Caco-2 (cell line): ENCODE measurements at regions of chr4 and their contacts with region 1.

Region 1: DNA sequence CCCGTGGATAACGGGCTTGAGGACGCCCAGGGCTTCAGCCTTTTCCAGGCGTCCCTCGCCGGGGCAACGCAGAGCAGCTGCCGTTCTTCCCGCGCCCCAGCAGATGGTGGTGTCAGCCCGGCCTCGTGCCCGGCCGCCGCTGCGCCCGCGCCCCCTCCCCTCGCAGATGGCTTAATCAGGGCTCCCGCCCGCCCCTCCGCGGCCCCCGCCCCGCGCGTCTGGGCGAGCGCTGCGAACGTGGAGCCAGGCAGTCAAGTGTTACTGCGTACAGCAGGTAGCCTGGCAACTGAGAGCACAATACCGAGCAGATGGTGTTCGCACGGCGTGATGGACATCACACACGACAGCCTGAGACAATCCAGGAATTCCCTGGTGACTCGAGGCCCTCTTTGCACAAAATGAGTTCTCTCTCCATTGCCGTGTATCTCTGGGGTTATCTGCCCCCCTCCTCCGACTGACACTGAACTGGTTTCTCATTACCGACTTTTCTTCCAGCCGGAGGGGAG is 69.3 kb downstream of the MGST2 start:
- DNase-seq: peak; percentile 82 to 89
- H3K4me3 ChIP-seq: peak overlapping the region; percentile 29
- H3K4me3 Mint-ChIP-seq: peak overlapping the region; percentile 69
- H3K27ac Mint-ChIP-seq: peak overlapping the region; percentile 78
- H3K4me1 ChIP-seq: peaks cover 39% of the 10 kb centered on the region
- H3K4me1 Mint-ChIP-seq: peaks cover 22% of the 10 kb centered on the region
- H3K27me3 ChIP-seq: no peaks in the 10 kb centered on the region
- H3K27me3 Mint-ChIP-seq: no peaks in the 10 kb centered on the region
- CTCF ChIP-seq: peak; percentile 76 to 82

Region 2: GRCh38 chr4:139167774-139168444 is 567.0 kb before region 1 on chr4:
- CTCF ChIA-PET with region 1: no interaction called
- POLR2A ChIA-PET with region 1: no interaction called
- intact Hi-C with region 1: no loop called
- DNase-seq: peak in 1 of 2 experiments; percentile 59
- H3K4me3 ChIP-seq: no peak overlapping the region
- H3K4me3 Mint-ChIP-seq: no peak overlapping the region
- H3K27ac Mint-ChIP-seq: no peak overlapping the region
- H3K4me1 ChIP-seq: peaks cover 22% of the 10 kb centered on the region
- H3K4me1 Mint-ChIP-seq: peaks cover 12% of the 10 kb centered on the region
- H3K27me3 ChIP-seq: no peaks in the 10 kb centered on the region
- H3K27me3 Mint-ChIP-seq: no peaks in the 10 kb centered on the region
- CTCF ChIP-seq: peak; percentile 55 to 59

Region 3: GRCh38 chr4:139603576-139604387 is 131.1 kb before region 1 on chr4:
- CTCF ChIA-PET with region 1: no interaction called
- POLR2A ChIA-PET with region 1: no interaction called
- intact Hi-C with region 1: loop called (anchors 1 kb)
- DNase-seq: peak; percentile 67 to 77
- H3K4me3 ChIP-seq: no peak overlapping the region
- H3K4me3 Mint-ChIP-seq: no peak overlapping the region
- H3K27ac Mint-ChIP-seq: no peak overlapping the region
- H3K4me1 ChIP-seq: peaks cover 34% of the 10 kb centered on the region; the same call in 1 of the 2 replicates
- H3K4me1 Mint-ChIP-seq: peaks cover 37% of the 10 kb centered on the region
- H3K27me3 ChIP-seq: no peaks in the 10 kb centered on the region
- H3K27me3 Mint-ChIP-seq: no peaks in the 10 kb centered on the region
- CTCF ChIP-seq: peak; percentile 64 to 71

Region 4: GRCh38 chr4:139692309-139693012 is 42.5 kb before region 1 on chr4:
- CTCF ChIA-PET with region 1: interaction called, 4 read pairs
- POLR2A ChIA-PET with region 1: no interaction called
- intact Hi-C with region 1: loop called (anchors 2 kb)
- DNase-seq: peak; percentile 60 to 64
- H3K4me3 ChIP-seq: no peak overlapping the region
- H3K4me3 Mint-ChIP-seq: peak overlapping the region; percentile 60
- H3K27ac Mint-ChIP-seq: peak overlapping the region; percentile 93
- H3K4me1 ChIP-seq: peaks cover 87% of the 10 kb centered on the region
- H3K4me1 Mint-ChIP-seq: peaks cover 40% of the 10 kb centered on the region
- H3K27me3 ChIP-seq: no peaks in the 10 kb centered on the region
- H3K27me3 Mint-ChIP-seq: no peaks in the 10 kb centered on the region
- CTCF ChIP-seq: peak; percentile 46 to 48

Region 5: DNA sequence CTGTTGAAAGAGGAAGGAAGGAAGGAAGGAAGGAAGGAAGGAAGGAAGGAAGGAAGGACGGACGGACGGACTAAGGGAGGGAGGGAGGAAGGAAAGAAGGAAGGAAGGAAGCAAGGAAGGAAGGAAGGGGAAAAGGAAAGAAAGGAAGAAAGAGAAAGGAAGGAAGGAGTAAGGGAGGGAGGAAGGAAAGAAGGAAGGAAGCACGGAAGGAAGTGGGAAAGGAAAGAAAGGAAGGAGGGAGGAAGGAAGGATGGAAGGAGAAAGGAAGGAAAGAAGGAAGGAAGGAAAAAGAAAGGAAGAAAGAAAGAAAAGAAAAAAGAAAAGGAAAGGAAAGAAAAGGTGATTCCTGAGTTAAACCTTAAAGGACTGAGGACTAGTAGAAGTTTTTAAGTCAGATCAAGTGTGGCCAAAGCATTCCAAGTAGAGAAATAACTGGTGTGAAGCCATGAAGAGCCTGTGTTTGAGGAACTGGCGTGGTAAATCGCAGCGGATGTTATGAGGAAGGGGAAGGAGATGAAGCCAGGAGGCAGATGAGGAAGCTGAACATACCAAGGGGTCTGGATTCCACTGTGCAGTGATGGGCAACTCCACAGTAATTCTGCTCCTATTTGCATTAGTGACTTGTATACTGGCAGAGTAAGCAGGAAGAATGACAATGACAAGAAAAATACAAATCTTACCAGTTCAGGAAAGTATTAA is 94.2 kb after region 1 on chr4:
- CTCF ChIA-PET with region 1: no interaction called
- POLR2A ChIA-PET with region 1: no interaction called
- intact Hi-C with region 1: no loop called
- DNase-seq: no peak
- H3K4me3 ChIP-seq: no peak overlapping the region
- H3K4me3 Mint-ChIP-seq: no peak overlapping the region
- H3K27ac Mint-ChIP-seq: no peak overlapping the region
- H3K4me1 ChIP-seq: no peaks in the 10 kb centered on the region
- H3K4me1 Mint-ChIP-seq: peaks cover 7% of the 10 kb centered on the region
- H3K27me3 ChIP-seq: no peaks in the 10 kb centered on the region
- H3K27me3 Mint-ChIP-seq: no peaks in the 10 kb centered on the region
- CTCF ChIP-seq: no peak

Region 6: GRCh38 chr4:139841464-139842246 is 106.7 kb after region 1 on chr4:
- CTCF ChIA-PET with region 1: no interaction called
- POLR2A ChIA-PET with region 1: no interaction called
- intact Hi-C with region 1: loop called (anchors 5 kb)
- DNase-seq: peak; percentile 56 to 71
- H3K4me3 ChIP-seq: no peak overlapping the region
- H3K4me3 Mint-ChIP-seq: peak overlapping the region; percentile 13
- H3K27ac Mint-ChIP-seq: no peak overlapping the region
- H3K4me1 ChIP-seq: peaks cover 16% of the 10 kb centered on the region
- H3K4me1 Mint-ChIP-seq: peaks cover 15% of the 10 kb centered on the region
- H3K27me3 ChIP-seq: no peaks in the 10 kb centered on the region
- H3K27me3 Mint-ChIP-seq: no peaks in the 10 kb centered on the region
- CTCF ChIP-seq: peak in 1 of 2 experiments; percentile 26

Region 7: DNA sequence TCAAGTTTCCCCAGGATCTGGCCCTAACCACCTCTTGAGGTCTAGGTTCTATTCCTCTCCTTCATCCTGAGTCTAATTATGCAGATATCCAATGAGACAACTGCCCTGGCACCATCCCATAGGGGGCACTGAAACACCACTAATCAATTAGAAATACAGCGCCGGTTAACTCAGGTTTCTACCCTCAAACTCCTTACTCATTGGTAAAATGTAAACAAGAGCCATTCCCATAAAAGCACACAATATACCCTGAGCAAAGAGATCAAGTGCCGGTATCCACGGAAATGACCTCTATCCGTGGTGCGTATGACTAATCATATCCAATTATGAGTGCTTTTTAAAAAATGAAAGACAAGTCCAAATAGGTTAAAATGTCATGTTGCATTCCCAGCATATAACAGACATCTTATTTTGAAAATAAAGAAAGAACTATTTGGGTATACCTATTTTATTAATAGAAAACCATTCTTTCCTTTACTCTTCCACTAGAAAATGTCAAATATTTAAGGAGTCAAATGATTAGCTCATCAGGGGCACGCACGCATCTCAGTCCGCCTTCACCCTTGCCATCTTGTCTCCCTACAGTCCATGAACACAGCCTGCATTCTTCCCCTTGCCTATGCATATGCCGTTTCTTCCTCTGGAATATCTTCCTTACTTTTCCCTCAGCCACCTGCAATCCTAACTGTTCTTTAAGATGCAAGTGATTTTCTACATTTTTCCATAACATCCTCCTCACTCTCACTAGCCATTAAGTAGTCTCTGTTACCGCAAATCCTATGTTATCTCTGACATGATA is 278.0 kb after region 1 on chr4:
- CTCF ChIA-PET with region 1: interaction called, 4 read pairs
- POLR2A ChIA-PET with region 1: no interaction called
- intact Hi-C with region 1: loop called (anchors 2 kb)
- DNase-seq: peak; percentile 69 to 77
- H3K4me3 ChIP-seq: no peak overlapping the region
- H3K4me3 Mint-ChIP-seq: peak overlapping the region; percentile 0
- H3K27ac Mint-ChIP-seq: peak overlapping the region; percentile 23
- H3K4me1 ChIP-seq: peaks cover 18% of the 10 kb centered on the region
- H3K4me1 Mint-ChIP-seq: peaks cover 30% of the 10 kb centered on the region
- H3K27me3 ChIP-seq: no peaks in the 10 kb centered on the region
- H3K27me3 Mint-ChIP-seq: no peaks in the 10 kb centered on the region
- CTCF ChIP-seq: peak; percentile 56 to 65

Region 8: GRCh38 chr4:140252742-140253555 is 518.0 kb after region 1 on chr4:
- CTCF ChIA-PET with region 1: interaction called, 5 read pairs
- POLR2A ChIA-PET with region 1: no interaction called
- intact Hi-C with region 1: loop called (anchors 1 kb)
- DNase-seq: peak; percentile 82 to 87
- H3K4me3 ChIP-seq: peak overlapping the region; percentile 66
- H3K4me3 Mint-ChIP-seq: peak overlapping the region; percentile 0
- H3K27ac Mint-ChIP-seq: peak overlapping the region; percentile 88
- H3K4me1 ChIP-seq: peaks cover 58% of the 10 kb centered on the region
- H3K4me1 Mint-ChIP-seq: peaks cover 26% of the 10 kb centered on the region
- H3K27me3 ChIP-seq: no peaks in the 10 kb centered on the region
- H3K27me3 Mint-ChIP-seq: no peaks in the 10 kb centered on the region
- CTCF ChIP-seq: peak; percentile 79 to 90